Activated CD4-positive, alpha-beta T cell treated with anti-CD3 and anti-CD28 coated beads for 36 hours (primary cell): ENCODE measurements at regions of chr2 and their contacts with region 1.

Region 1: DNA sequence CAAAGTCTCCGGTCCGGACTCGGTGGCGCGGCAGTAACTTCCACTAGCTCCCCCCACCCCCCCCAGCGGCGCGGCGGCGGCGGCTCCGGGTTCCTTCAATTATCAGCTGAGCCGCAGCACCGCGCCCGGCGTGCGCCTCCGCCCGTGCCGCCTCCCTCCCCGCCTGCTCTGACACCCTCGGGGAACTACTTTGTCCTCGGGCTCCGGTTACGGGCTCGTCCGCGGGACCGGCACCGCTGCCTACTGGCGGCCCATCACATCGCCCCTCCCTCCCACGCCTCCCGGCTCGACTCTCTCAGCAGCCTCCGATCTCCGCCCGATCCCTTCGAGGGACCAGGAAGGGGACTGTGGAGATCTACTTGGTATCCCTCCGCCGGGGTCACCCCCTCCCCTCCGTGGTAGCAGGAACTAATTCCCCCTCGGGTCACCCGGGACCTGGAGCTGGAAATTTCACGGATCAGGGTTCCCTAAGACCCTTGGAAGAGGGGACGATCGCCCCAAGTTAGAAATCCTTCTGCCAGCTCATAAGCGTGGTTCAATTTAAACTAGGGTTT is at the start of gene TRIP12:
- DNase-seq: peak; percentile 93
- ATAC-seq: peak; percentile 82
- H3K4me3 Mint-ChIP-seq: peak within 1 kb of the TSS; percentile 100
- H3K27ac Mint-ChIP-seq: peak within 1 kb of the TSS; percentile 99
- H3K4me1 Mint-ChIP-seq: peaks cover 35% of the 10 kb centered on the region
- H3K27me3 Mint-ChIP-seq: no peaks in the 10 kb centered on the region
- total RNA-seq, gene TRIP12: 231 to 382 TPM

Region 2: DNA sequence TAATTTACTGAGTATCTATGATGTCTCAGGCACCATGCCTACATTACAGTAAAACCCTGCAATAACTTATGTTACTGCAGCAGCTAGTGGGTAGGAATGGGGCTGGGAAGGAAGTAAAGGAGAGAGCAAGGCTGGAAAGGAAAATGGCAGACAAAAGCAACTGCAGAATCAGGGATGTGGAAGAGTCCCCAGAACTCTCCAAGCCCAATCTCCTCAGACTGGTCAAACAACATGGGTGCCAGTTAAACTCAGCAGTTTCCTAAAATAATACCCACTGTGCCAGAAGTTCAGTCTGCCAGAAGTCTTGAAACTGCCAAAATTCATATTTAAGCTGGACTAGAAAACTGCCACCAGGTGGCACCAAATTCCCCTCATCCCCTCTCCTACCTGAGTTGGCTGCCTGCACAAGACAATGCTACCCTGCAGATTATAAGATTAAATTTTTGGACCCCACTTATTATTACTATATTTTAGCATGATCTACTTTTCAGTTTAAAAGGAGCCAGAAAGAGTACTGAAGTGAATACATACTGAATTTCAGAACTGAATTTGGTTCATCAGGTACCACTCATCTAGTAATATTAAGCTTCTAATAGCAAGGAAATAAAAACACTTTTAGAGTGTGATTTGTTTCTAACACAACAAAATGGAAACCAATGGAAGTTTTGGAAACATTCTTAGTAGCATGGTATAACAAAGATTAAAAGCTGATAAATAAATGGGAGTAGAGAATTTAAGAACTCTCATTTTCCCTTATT is 120.8 kb before region 1 on chr2:
- CTCF ChIA-PET with region 1: interaction called, 6 read pairs
- POLR2A ChIA-PET with region 1: no interaction called
- intact Hi-C with region 1: loop called in 1 of 2 experiments (anchors 1 kb)
- DNase-seq: peak; percentile 86
- ATAC-seq: peak; percentile 78
- H3K4me3 Mint-ChIP-seq: no peak overlapping the region
- H3K27ac Mint-ChIP-seq: no peak overlapping the region
- H3K4me1 Mint-ChIP-seq: no peaks in the 10 kb centered on the region
- H3K27me3 Mint-ChIP-seq: no peaks in the 10 kb centered on the region

Region 3: DNA sequence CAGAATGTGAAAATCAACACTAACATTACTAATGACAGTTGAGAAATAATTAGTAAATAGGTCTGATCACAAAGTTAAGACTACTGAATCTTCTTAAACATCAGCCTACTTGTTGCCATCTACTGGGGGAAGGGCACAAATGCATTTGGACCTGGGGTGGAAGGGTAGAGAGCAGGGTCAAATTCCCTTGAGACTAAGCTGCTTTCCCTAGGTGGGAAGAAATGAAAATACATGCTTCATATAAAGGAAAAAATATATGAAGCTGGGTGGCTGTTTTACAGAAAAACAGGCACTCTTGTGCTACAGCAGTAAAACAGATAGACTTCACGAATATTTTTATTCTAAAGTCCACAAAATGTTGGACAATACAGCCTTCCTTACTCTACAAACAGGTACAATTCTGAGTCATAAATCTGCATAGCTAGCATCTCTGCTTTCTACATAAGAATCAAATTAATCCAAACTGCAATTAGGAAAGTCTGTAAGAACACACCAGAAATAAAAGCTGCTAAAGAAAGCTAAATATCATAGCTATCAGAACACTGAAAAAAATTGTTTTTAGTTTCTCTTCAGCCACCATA is 11.0 kb before region 1 on chr2:
- CTCF ChIA-PET with region 1: interaction called, 14 read pairs
- POLR2A ChIA-PET with region 1: no interaction called
- intact Hi-C with region 1: loop called (anchors 1 kb)
- DNase-seq: peak; percentile 38
- ATAC-seq: peak; percentile 75
- H3K4me3 Mint-ChIP-seq: no peak overlapping the region
- H3K27ac Mint-ChIP-seq: peak overlapping the region; percentile 2
- H3K4me1 Mint-ChIP-seq: peaks cover 52% of the 10 kb centered on the region
- H3K27me3 Mint-ChIP-seq: no peaks in the 10 kb centered on the region

Region 4: DNA sequence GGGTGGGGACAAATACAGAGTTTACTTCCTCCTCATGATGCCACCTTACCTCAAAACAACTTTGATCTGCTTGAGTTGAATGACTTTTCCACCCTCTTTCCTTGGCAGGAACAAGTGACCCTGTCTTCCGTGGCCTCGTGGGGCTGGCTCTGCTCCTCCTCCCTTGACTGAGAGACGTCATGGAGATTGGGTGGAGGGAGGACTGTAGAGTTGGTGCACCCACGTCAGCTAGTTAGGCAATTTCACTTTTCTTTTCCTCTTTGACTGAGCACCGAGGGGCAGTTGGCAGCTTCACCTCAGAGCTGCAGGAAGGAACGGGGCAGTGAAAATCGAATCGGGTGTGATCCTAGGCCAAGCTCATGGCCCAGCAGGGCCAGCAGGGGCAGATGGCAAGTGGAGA is 303.5 kb after region 1 on chr2 and contains the start of gene SP140:
- CTCF ChIA-PET with region 1: no interaction called
- POLR2A ChIA-PET with region 1: no interaction called
- intact Hi-C with region 1: loop called in 1 of 2 experiments (anchors 5 kb)
- DNase-seq: peak; percentile 85
- ATAC-seq: peak; percentile 87
- H3K4me3 Mint-ChIP-seq: peak within 1 kb of the TSS; percentile 81
- H3K27ac Mint-ChIP-seq: peak within 1 kb of the TSS; percentile 96
- H3K4me1 Mint-ChIP-seq: peaks cover 51% of the 10 kb centered on the region
- H3K27me3 Mint-ChIP-seq: no peaks in the 10 kb centered on the region
- total RNA-seq, gene SP140: 71.3 to 84.2 TPM

Region 5: GRCh38 chr2:230793572-230794359 is 871.8 kb after region 1 on chr2:
- CTCF ChIA-PET with region 1: no interaction called
- POLR2A ChIA-PET with region 1: no interaction called
- intact Hi-C with region 1: loop called in 1 of 2 experiments (anchors 1 kb)
- DNase-seq: peak; percentile 83
- ATAC-seq: peak; percentile 92
- H3K4me3 Mint-ChIP-seq: peak overlapping the region; percentile 66
- H3K27ac Mint-ChIP-seq: no peak overlapping the region
- H3K4me1 Mint-ChIP-seq: peaks cover 59% of the 10 kb centered on the region
- H3K27me3 Mint-ChIP-seq: no peaks in the 10 kb centered on the region